Psoas muscle (tissue), 8 donors: ENCODE measurements at regions of chr2 and their contacts with region 1.

Region 1: GRCh38 chr2:28392297-28393113 is at the start of gene FOSL2:
- DNase-seq: peak; percentile 97 to 98
- ATAC-seq: peak; percentile 55 to 73 (median 66)
- H3K4me3 ChIP-seq: peak within 1 kb of the TSS; percentile 100
- H3K27ac ChIP-seq: peak within 1 kb of the TSS; percentile 100
- H3K4me1 ChIP-seq: peaks cover 11% of the 10 kb centered on the region
- H3K27me3 ChIP-seq: no peaks in the 10 kb centered on the region
- CTCF ChIP-seq: peak; percentile 1
- total RNA-seq, gene FOSL2: 52.2 to 278 (median 192) TPM

Region 2: GRCh38 chr2:27703638-27704341 is 688.7 kb before region 1 on chr2:
- intact Hi-C with region 1: loop called (anchors 5 to 10 kb)
- DNase-seq: peak; percentile 82 to 88
- ATAC-seq: peak; percentile 43 to 54 (median 48)
- H3K4me3 ChIP-seq: no peak overlapping the region
- H3K27ac ChIP-seq: peak overlapping the region; percentile 90
- H3K4me1 ChIP-seq: peaks cover 48% of the 10 kb centered on the region
- H3K27me3 ChIP-seq: no peaks in the 10 kb centered on the region
- CTCF ChIP-seq: peak; percentile 93

Region 3: DNA sequence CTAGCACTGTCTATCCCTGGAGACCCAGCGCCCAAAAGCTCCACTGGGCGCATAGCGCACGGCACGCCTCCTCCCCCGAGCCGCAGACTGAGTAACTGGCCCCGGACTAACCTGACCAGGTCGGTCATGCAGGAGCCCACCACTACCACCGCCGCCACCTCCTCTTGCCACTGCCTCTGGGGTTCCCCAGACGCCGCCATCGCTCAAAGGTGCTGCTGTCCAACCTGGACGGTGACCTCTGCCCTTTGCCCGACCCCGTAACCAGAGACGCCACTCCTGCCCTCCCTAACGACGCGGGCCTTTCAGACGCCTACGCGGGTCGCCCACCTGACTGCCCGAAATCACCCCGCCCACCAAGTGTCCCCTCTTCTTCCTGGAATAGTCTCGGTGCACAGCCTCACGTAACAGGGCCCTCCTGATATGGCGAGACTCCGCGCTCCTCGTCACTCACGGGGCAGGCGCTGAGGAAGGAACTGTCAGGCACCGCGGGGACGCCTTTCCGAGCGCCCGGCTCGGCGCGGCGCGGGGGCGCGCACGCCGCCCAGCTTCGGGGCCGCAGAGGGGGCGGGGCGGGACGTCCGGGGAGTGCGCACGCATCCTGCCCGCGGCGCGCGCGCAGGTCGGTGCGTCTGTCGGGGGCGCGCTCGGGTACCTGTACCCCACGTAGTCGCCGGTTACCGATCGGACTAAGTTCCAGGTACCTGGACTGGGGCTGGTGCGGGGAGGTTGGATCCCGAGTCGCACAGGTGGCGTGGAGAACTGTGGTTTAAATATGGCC is 502.2 kb before region 1 on chr2 and contains the starts of genes BABAM2 and RBKS:
- intact Hi-C with region 1: loop called in 1 of 2 experiments (anchors 10 kb)
- DNase-seq: peak; percentile 89 to 94
- ATAC-seq: peak; percentile 96 to 98 (median 97)
- H3K4me3 ChIP-seq: peak within 1 kb of the TSS; percentile 70
- H3K27ac ChIP-seq: peak within 1 kb of the TSS; percentile 88
- H3K4me1 ChIP-seq: peaks cover 26% of the 10 kb centered on the region
- H3K27me3 ChIP-seq: no peaks in the 10 kb centered on the region
- CTCF ChIP-seq: no peak
- total RNA-seq, gene BABAM2: 48.2 to 74.5 (median 57.2) TPM
- total RNA-seq, gene RBKS: 3.5 to 4.4 (median 3.8) TPM

Region 4: DNA sequence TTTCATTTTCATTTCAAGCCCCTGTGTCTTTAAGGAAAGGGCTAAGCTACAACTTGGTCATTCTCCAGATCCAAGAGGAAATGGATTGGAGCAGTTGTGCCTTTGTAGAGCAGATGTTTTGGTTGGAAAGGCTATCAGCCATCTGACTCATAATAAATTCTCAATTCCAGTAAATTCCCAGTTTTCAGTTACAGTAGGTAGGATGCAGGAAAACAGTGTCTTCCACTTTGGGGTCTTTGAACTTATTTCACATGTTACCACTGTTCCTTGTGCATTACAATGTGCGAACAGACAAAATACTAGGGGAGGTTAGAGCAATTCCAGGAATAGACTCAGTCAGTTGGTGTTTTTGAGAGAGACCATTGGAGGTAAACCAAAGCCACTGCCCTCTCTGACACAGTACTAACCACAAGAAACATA is 290.0 kb before region 1 on chr2:
- intact Hi-C with region 1: loop called in 1 of 2 experiments (anchors 2 kb)
- DNase-seq: no peak
- ATAC-seq: peak; percentile 74 to 87 (median 82)
- H3K4me3 ChIP-seq: peak overlapping the region; percentile 46
- H3K27ac ChIP-seq: peak overlapping the region; percentile 72
- H3K4me1 ChIP-seq: peaks cover 42% of the 10 kb centered on the region
- H3K27me3 ChIP-seq: no peaks in the 10 kb centered on the region
- CTCF ChIP-seq: no peak

Region 5: DNA sequence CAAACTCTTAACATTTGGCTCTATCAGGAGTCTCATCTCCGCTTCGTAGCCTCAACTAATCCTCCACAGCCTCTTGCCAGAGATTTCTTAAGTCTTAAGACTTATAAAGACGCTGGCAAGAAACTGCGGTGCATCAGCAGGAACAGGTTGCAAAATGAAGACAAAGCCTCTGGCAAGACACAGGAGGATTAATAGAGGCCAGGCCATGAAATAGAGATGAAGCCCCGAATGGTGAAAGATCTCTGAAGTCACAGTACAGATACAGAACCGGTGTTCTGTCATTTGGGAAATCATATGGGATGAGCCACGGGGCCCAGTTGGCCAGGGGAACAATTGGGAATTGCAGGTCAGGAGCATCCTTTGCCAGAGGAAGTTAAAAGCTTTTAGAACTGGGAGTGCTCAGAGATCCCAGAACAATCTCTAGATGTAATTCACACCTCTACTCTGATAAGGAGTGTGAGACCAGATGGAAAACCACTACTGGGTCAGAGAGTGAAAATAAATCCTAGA is 190.8 kb before region 1 on chr2:
- intact Hi-C with region 1: loop called in 1 of 2 experiments (anchors 5 kb)
- DNase-seq: peak; percentile 61 to 86
- ATAC-seq: peak; percentile 82 to 93 (median 92)
- H3K4me3 ChIP-seq: no peak overlapping the region
- H3K27ac ChIP-seq: peak overlapping the region; percentile 65
- H3K4me1 ChIP-seq: peaks cover 23% of the 10 kb centered on the region
- H3K27me3 ChIP-seq: no peaks in the 10 kb centered on the region
- CTCF ChIP-seq: no peak

Region 6: GRCh38 chr2:28342081-28342967 is 50.2 kb before region 1 on chr2:
- intact Hi-C with region 1: loop called in 1 of 2 experiments (anchors 2 kb)
- DNase-seq: peak; percentile 81 to 82
- ATAC-seq: peak; percentile 49 to 78 (median 72)
- H3K4me3 ChIP-seq: peak overlapping the region; percentile 50
- H3K27ac ChIP-seq: peak overlapping the region; percentile 85
- H3K4me1 ChIP-seq: peaks cover 60% of the 10 kb centered on the region
- H3K27me3 ChIP-seq: no peaks in the 10 kb centered on the region
- CTCF ChIP-seq: no peak

Region 7: GRCh38 chr2:28413142-28413898 is 20.8 kb after region 1 on chr2:
- intact Hi-C with region 1: no loop called
- DNase-seq: peak; percentile 65 to 86
- ATAC-seq: peak; percentile 59 to 88 (median 70)
- H3K4me3 ChIP-seq: no peak overlapping the region
- H3K27ac ChIP-seq: peak overlapping the region; percentile 80
- H3K4me1 ChIP-seq: peaks cover 34% of the 10 kb centered on the region
- H3K27me3 ChIP-seq: no peaks in the 10 kb centered on the region
- CTCF ChIP-seq: peak; percentile 45

Region 8: GRCh38 chr2:28436525-28437051 is 44.1 kb after region 1 on chr2:
- intact Hi-C with region 1: no loop called
- DNase-seq: no peak
- ATAC-seq: peak in 3 of 4 donors; percentile 17 to 26 (median 19)
- H3K4me3 ChIP-seq: no peak overlapping the region
- H3K27ac ChIP-seq: no peak overlapping the region
- H3K4me1 ChIP-seq: no peaks in the 10 kb centered on the region
- H3K27me3 ChIP-seq: no peaks in the 10 kb centered on the region
- CTCF ChIP-seq: no peak

Region 9: DNA sequence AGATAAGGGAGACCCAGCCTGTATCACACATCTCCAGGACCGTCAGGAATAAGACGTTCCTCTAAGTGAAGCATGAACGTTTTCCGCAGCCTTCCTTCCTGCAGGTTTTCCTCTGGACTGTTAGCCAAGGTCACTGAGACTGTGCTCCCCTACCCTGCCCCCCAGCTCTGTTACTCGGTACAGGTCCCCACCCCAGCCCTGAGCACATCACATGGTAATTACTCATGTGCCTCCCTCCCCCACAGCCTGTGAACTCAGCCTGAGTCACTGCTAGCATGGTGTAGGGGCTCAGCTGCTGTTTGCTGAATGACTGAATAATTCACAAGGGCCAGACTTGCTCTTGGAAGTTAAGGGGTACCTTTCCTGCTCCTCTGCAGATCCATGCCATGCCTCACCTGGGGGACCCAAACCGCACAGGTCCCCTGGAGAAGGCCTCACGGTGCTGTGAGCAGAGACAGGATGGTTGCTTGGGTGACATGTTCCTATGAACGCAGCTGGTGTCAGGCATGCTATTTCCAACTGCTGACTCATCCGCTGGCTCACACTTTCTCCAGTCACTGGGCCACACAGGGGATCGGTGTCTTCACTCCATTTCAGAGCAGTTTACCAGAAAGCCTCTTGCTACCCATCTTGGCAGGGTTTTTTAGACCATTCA is 191.5 kb after region 1 on chr2:
- intact Hi-C with region 1: no loop called
- DNase-seq: peak; percentile 87 to 92
- ATAC-seq: peak; percentile 85 to 90 (median 86)
- H3K4me3 ChIP-seq: peak overlapping the region; percentile 33
- H3K27ac ChIP-seq: peak overlapping the region; percentile 97
- H3K4me1 ChIP-seq: peaks cover 53% of the 10 kb centered on the region
- H3K27me3 ChIP-seq: no peaks in the 10 kb centered on the region
- CTCF ChIP-seq: no peak